ENCODE measurements at regions of chr4 and their contacts with region 1.

Region 1: DNA sequence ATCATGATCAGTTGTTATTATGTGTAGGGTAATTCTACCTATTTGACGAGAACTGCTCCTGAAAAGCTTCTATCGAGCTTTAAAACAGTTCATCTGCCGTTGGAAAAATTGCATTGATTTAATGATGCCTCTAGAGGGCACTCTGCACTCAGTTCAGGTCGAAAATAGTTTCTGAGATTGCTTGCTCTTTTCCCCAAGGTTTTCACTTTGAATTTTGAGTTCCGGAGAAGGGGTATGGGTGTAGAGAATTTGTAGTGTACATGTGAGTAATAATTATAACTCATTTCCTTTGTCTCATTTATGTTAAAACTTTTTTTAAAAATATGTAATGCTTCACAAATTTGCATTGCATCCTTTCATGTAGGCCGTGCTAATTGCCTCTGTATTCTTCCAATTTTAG is 28.4 kb upstream of the TNIP3 start:
- DNase-seq: peak in 5 of 14 experiments; percentile 6 to 72 (median 67)
- ATAC-seq: no peak
- H3K4me3 ChIP-seq: no peak overlapping the region
- H3K4me3 Mint-ChIP-seq: peak overlapping the region; percentile 76
- H3K27ac ChIP-seq: no peak overlapping the region
- H3K27ac Mint-ChIP-seq: peak overlapping the region; percentile 81
- H3K4me1 ChIP-seq: peaks cover 24% of the 10 kb centered on the region
- H3K4me1 Mint-ChIP-seq: peaks cover 55% of the 10 kb centered on the region
- H3K27me3 ChIP-seq: no peaks in the 10 kb centered on the region
- H3K27me3 Mint-ChIP-seq: no peaks in the 10 kb centered on the region
- CTCF ChIP-seq: peak; percentile 90

Region 2: DNA sequence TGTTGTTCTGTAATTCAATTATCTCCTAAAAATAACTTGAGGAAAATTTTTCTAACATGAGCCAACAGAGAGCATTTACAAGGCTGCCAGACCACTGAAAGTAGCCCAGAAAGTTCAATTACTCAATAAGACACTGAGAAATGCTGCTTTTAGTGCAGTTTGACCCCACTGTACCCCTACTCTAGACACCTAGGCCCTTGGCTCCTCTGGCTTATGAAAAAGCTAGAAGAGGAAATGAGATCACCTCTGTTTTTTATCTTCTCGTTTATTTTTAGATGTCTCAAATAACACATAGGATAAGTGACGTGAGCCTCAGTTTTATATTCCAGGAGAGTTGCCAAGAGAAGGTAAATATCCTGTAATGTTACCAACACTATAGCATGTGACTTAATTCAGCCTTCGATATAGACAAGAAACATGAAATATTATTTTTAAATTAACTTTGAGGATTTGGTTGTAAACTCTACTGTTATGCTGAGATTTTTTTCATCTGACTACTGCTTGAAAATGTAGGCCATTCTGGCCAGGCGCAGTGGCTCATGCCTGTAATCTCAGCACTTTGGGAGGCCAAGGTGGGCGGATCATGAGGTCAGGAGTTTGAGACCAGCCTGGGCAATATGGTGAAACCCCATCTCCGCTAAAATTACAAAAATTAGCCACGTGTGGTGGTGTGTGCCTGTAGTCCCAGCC is 52.8 kb before region 1 on chr4:
- CTCF ChIA-PET with region 1: interaction called, 11 read pairs
- POLR2A ChIA-PET with region 1: interaction called, 4 read pairs
- intact Hi-C with region 1: loop called (anchors 5 to 10 kb)
- DNase-seq: peak in 4 of 14 experiments; percentile 13 to 78 (median 46)
- ATAC-seq: peak; percentile 82
- H3K4me3 ChIP-seq: no peak overlapping the region
- H3K4me3 Mint-ChIP-seq: peak overlapping the region; percentile 17
- H3K27ac ChIP-seq: peak overlapping the region; percentile 53 to 58
- H3K27ac Mint-ChIP-seq: peak overlapping the region; percentile 85
- H3K4me1 ChIP-seq: peaks cover 25% of the 10 kb centered on the region
- H3K4me1 Mint-ChIP-seq: peaks cover 57% of the 10 kb centered on the region
- H3K27me3 ChIP-seq: no peaks in the 10 kb centered on the region
- H3K27me3 Mint-ChIP-seq: no peaks in the 10 kb centered on the region
- CTCF ChIP-seq: no peak

Region 3: DNA sequence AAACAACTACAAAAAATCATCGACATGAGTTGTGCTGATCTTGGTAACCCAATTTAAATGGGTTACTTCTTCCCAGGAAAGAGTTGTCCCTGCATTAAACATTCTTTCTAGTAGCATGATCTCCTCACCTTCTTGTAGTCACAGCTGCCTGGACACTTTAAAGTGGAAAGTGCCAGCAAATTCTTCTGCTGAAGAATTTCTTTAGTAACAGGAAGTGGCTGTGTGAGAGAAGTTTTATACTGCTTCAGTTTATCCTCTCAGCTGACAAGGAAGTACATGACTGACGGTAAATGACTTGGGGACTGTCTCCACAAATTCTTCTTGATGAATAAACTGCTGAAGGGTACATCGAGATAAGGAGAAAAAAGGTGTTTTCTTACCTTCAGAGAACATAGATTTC is 10.2 kb before region 1 on chr4:
- CTCF ChIA-PET with region 1: interaction called, 19 read pairs
- POLR2A ChIA-PET with region 1: interaction called, 11 read pairs
- intact Hi-C with region 1: no loop called
- DNase-seq: peak in 6 of 14 experiments; percentile 11 to 87 (median 51)
- ATAC-seq: peak; percentile 83
- H3K4me3 ChIP-seq: peak overlapping the region; percentile 55
- H3K4me3 Mint-ChIP-seq: peak overlapping the region; percentile 87
- H3K27ac ChIP-seq: peak overlapping the region; percentile 76 to 94
- H3K27ac Mint-ChIP-seq: peak overlapping the region; percentile 95
- H3K4me1 ChIP-seq: peaks cover 52% of the 10 kb centered on the region
- H3K4me1 Mint-ChIP-seq: peaks cover 85% of the 10 kb centered on the region
- H3K27me3 ChIP-seq: no peaks in the 10 kb centered on the region
- H3K27me3 Mint-ChIP-seq: no peaks in the 10 kb centered on the region
- CTCF ChIP-seq: no peak

Region 4: GRCh38 chr4:121272526-121272925 is 80.0 kb after region 1 on chr4:
- CTCF ChIA-PET with region 1: no interaction called
- POLR2A ChIA-PET with region 1: no interaction called
- intact Hi-C with region 1: no loop called
- DNase-seq: peak in 1 of 14 experiments; percentile 30
- ATAC-seq: no peak
- H3K4me3 ChIP-seq: no peak overlapping the region
- H3K4me3 Mint-ChIP-seq: no peak overlapping the region
- H3K27ac ChIP-seq: no peak overlapping the region
- H3K27ac Mint-ChIP-seq: no peak overlapping the region
- H3K4me1 ChIP-seq: no peaks in the 10 kb centered on the region
- H3K4me1 Mint-ChIP-seq: peaks cover 9% of the 10 kb centered on the region
- H3K27me3 ChIP-seq: no peaks in the 10 kb centered on the region
- H3K27me3 Mint-ChIP-seq: no peaks in the 10 kb centered on the region
- CTCF ChIP-seq: no peak

Region 5: GRCh38 chr4:121307445-121308327 is 115.2 kb after region 1 on chr4:
- CTCF ChIA-PET with region 1: interaction called, 11 read pairs
- POLR2A ChIA-PET with region 1: interaction called, 3 read pairs
- intact Hi-C with region 1: loop called (anchors 2 kb)
- DNase-seq: peak in 10 of 14 experiments; percentile 2 to 77 (median 26)
- ATAC-seq: no peak
- H3K4me3 ChIP-seq: no peak overlapping the region
- H3K4me3 Mint-ChIP-seq: no peak overlapping the region
- H3K27ac ChIP-seq: no peak overlapping the region
- H3K27ac Mint-ChIP-seq: no peak overlapping the region
- H3K4me1 ChIP-seq: peaks cover 5% of the 10 kb centered on the region
- H3K4me1 Mint-ChIP-seq: peaks cover 15% of the 10 kb centered on the region
- H3K27me3 ChIP-seq: no peaks in the 10 kb centered on the region
- H3K27me3 Mint-ChIP-seq: peaks cover 4% of the 10 kb centered on the region
- CTCF ChIP-seq: peak; percentile 81

Region 6: DNA sequence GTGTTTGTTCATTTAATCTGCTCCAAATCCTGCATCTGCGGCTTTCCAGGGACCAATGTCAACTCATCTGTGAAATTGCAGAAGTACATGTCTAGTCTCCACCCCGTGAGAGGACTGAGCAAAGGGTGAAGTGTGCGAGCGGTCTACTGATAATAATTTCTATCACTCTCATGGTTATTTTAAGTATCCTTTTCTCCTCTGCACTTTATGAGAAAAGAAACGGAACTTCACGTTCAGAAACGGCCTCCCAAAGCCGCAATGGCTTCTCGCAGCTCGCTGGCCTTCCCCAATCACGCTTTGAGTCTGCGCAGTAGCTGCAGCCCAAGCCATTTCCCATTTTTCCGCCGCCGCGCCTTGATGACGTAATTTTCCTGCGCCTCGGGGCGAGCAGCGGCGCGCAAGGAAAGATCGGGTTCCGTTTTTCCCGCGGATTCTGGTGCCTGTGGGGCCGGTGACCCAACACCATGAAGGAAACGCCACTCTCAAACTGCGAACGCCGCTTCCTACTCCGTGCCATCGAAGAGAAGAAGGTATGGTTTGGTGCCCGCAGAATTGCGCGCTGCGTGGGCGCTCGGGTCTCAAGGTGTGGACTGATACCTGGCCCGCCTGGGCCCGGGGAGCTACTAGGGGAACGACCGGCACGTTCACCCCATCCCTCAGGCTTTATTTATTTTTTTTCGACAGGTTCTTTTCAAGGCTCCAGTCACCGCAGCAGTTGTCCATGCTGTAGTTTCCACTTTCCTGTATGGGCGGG is 608.7 kb after region 1 on chr4 and contains the start of gene EXOSC9:
- CTCF ChIA-PET with region 1: no interaction called
- POLR2A ChIA-PET with region 1: no interaction called
- intact Hi-C with region 1: loop called in 1 of 2 experiments (anchors 10 kb)
- DNase-seq: peak; percentile 88 to 97 (median 94)
- ATAC-seq: peak; percentile 87
- H3K4me3 ChIP-seq: peak within 1 kb of the TSS; percentile 95
- H3K4me3 Mint-ChIP-seq: peak within 1 kb of the TSS; percentile 96
- H3K27ac ChIP-seq: peak within 1 kb of the TSS; percentile 80 to 96
- H3K27ac Mint-ChIP-seq: peak within 1 kb of the TSS; percentile 100
- H3K4me1 ChIP-seq: peaks cover 13% of the 10 kb centered on the region
- H3K4me1 Mint-ChIP-seq: peaks cover 51% of the 10 kb centered on the region
- H3K27me3 ChIP-seq: no peaks in the 10 kb centered on the region
- H3K27me3 Mint-ChIP-seq: no peaks in the 10 kb centered on the region
- CTCF ChIP-seq: no peak
- total RNA-seq, gene EXOSC9: 71.6 to 72.7 TPM